ENCODE measurements at regions of chr9 and their contacts with region 1.

Region 1: DNA sequence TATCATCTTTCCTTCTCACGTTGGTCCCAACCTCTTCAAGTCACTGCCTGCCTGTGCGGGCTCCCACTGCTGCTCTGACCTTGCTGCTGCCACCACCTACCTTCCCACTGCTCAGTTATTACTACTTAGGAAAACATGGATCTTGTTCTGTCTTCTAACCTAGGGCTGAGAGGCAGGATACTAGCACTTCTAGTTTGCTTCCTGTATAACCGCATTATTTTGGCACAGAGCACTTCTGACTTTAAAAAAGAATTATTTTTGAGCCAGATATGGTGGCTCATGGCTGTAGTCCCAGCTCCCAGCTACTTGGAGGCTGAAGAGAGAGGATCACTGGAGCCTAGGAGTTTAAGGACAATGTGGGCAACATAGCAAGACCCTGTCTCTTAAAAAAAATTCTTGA is 135.4 kb upstream of the GNA14 start:
- DNase-seq: no peak
- ATAC-seq: no peak
- H3K4me3 ChIP-seq: no peak overlapping the region
- H3K27ac ChIP-seq: no peak overlapping the region
- H3K4me1 ChIP-seq: no peaks in the 10 kb centered on the region
- H3K27me3 ChIP-seq: no peaks in the 10 kb centered on the region
- CTCF ChIP-seq: no peak
- POLR2A ChIP-seq: no peak

Region 2: GRCh38 chr9:77142366-77142765 is 641.2 kb before region 1 on chr9:
- in situ Hi-C with region 1: no loop called
- intact Hi-C with region 1: no loop called
- DNase-seq: no peak
- ATAC-seq: no peak
- H3K4me3 ChIP-seq: no peak overlapping the region
- H3K27ac ChIP-seq: no peak overlapping the region
- H3K4me1 ChIP-seq: no peaks in the 10 kb centered on the region
- H3K27me3 ChIP-seq: no peaks in the 10 kb centered on the region
- CTCF ChIP-seq: no peak
- POLR2A ChIP-seq: no peak

Region 3: GRCh38 chr9:77841739-77842386 is 58.3 kb after region 1 on chr9:
- in situ Hi-C with region 1: loop called in 1 of 4 experiments (anchors 10 kb)
- intact Hi-C with region 1: no loop called
- DNase-seq: no peak
- ATAC-seq: peak in 1 of 2 donors; percentile 33
- H3K4me3 ChIP-seq: no peak overlapping the region
- H3K27ac ChIP-seq: no peak overlapping the region
- H3K4me1 ChIP-seq: peaks cover 4 to 6% of the 10 kb centered on the region in 2 donors
- H3K27me3 ChIP-seq: no peaks in the 10 kb centered on the region
- CTCF ChIP-seq: peak in 4 of 5 experiments; percentile 6 to 41 (median 21)
- POLR2A ChIP-seq: no peak

Measured in gastrocnemius medialis (tissue), 4 donors.